ENCODE measurements at regions of chr2 and their contacts with region 1.

Region 1: DNA sequence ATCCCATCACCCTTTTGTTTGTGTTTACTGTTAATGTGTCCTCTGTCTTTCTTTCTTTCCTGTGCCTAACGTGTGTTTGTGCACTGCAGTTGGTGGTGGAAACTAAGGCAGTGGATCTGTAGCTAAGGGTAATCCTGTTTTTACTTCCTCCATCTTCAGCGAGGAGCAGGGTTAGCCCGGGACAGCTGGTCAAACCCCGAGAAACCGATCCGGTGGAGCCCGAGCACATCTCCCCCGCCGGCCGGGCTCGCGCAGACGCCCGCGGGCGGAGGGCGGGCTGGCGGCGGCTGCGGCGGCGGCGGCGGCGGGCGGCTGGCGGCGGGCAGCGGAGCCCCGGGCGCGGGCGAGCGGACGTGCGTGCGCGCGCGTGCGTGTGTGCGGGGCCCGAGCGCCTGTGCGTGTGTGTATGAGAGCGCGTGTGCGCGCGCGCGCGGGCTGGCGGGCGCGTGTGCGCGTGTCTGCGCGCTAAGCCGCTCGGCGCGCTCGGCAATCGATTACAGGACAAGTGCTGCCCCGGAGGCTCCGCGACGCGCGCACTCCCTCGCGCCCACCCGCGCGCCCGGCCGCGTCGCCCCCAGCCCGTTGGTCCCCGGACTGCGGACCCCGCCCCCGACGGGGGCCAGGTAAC is at the start of gene IKZF2:
- DNase-seq: peak; percentile 56
- H3K4me3 Mint-ChIP-seq: peak within 1 kb of the TSS; percentile 81
- H3K27ac Mint-ChIP-seq: peak within 1 kb of the TSS; percentile 68
- H3K4me1 Mint-ChIP-seq: peaks cover 17% of the 10 kb centered on the region
- H3K27me3 Mint-ChIP-seq: peaks cover 54% of the 10 kb centered on the region
- total RNA-seq, gene IKZF2: 1.6 to 1.7 TPM

Region 2: GRCh38 chr2:212686285-212686895 is 465.2 kb before region 1 on chr2:
- CTCF ChIA-PET with region 1: interaction called, 3 read pairs
- intact Hi-C with region 1: loop called (anchors 1 kb)
- DNase-seq: peak; percentile 72
- H3K4me3 Mint-ChIP-seq: no peak overlapping the region
- H3K27ac Mint-ChIP-seq: no peak overlapping the region
- H3K4me1 Mint-ChIP-seq: no peaks in the 10 kb centered on the region
- H3K27me3 Mint-ChIP-seq: no peaks in the 10 kb centered on the region

Region 3: DNA sequence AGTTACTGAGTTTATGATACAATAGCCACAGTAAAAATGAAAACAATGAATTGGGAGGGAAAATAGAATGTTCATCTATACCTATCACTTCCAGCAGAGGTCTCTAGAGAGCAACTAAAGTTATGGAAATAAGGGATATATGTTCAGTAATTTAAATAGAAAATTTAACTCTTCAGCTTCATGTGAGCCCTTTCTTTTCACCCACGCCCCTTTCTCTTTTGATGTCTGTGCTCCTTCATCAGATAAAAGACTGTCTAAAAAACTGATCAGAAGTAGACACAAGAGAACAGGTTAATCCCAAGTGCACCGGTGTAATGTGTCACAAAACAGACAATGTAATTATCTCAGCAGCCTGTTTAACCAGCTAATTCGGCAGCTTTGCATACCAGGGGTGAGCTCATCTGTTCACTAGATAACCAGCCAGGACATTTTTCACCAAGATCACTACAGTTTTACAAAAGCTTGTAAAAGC is 374.5 kb before region 1 on chr2:
- CTCF ChIA-PET with region 1: interaction called, 6 read pairs
- intact Hi-C with region 1: loop called (anchors 1 kb)
- DNase-seq: no peak
- H3K4me3 Mint-ChIP-seq: no peak overlapping the region
- H3K27ac Mint-ChIP-seq: no peak overlapping the region
- H3K4me1 Mint-ChIP-seq: no peaks in the 10 kb centered on the region
- H3K27me3 Mint-ChIP-seq: peaks cover 2% of the 10 kb centered on the region

Region 4: DNA sequence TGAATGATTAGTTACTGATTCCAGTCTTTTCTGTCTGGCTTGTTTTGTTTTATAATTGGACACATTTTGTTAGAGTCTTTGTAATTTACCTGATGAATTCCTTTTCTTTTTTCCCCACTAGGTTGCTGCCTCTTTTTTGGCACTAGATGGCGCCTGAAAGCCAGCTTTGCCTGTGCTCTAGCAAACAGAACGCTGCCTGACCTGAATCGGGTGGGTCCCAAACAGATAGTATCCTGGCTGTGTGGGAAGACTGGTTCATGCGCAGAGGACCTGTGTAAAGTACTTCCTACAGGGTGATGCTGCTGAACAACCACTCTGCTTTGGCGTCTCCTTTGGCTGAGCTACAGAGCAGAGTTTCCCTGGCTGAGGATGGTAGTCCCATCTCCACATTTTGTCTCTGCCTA is 288.4 kb before region 1 on chr2:
- CTCF ChIA-PET with region 1: interaction called, 4 read pairs
- intact Hi-C with region 1: loop called (anchors 1 kb)
- DNase-seq: peak; percentile 43
- H3K4me3 Mint-ChIP-seq: no peak overlapping the region
- H3K27ac Mint-ChIP-seq: no peak overlapping the region
- H3K4me1 Mint-ChIP-seq: no peaks in the 10 kb centered on the region
- H3K27me3 Mint-ChIP-seq: no peaks in the 10 kb centered on the region

Region 5: DNA sequence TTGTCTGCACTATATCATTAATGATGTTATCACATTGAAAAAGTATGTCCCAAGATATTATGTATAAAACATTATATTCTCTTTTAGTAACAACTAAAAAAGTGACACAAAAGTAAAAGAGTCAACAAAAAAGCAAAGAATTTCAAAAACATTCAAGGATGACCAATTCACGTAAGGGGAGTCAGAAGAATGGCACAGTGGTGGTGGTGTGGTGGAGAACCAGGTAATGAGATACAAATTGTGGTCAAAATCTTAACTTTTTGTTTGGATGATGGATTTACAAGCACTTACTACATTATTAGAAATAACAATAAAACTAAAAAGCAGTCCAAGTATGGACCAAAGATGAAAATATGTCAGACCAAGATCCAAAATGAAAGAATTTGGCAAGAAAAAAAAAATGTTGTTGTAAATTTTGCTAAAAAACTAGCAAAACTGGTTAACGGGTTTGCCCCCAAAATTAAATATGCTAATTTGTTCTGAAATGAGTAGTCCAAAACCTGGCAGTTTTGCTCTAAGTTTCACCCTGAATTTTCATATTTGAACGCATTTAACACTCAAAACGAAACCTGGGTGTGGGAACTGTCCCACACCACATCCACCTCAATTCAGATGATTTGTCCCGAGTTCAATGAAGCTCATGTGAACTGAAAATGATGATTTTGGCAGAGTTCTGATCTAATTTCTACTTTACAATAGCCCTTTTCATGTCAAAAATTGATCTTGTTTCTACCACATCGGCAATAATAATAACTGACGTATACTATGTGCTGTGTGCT is 136.0 kb before region 1 on chr2:
- CTCF ChIA-PET with region 1: no interaction called
- intact Hi-C with region 1: loop called (anchors 2 kb)
- DNase-seq: peak; percentile 66
- H3K4me3 Mint-ChIP-seq: no peak overlapping the region
- H3K27ac Mint-ChIP-seq: no peak overlapping the region
- H3K4me1 Mint-ChIP-seq: peaks cover 18% of the 10 kb centered on the region
- H3K27me3 Mint-ChIP-seq: peaks cover 9% of the 10 kb centered on the region

Region 6: GRCh38 chr2:213119061-213119856 is 32.3 kb before region 1 on chr2:
- CTCF ChIA-PET with region 1: interaction called, 4 read pairs
- intact Hi-C with region 1: loop called (anchors 2 kb)
- DNase-seq: peak; percentile 6
- H3K4me3 Mint-ChIP-seq: no peak overlapping the region
- H3K27ac Mint-ChIP-seq: peak overlapping the region; percentile 23
- H3K4me1 Mint-ChIP-seq: peaks cover 9% of the 10 kb centered on the region
- H3K27me3 Mint-ChIP-seq: peaks cover 6% of the 10 kb centered on the region

Region 7: GRCh38 chr2:213284105-213285090 is 132.8 kb after region 1 on chr2 and contains the start of gene SPAG16:
- CTCF ChIA-PET with region 1: no interaction called
- intact Hi-C with region 1: loop called (anchors 2 kb)
- DNase-seq: peak; percentile 98
- H3K4me3 Mint-ChIP-seq: peak within 1 kb of the TSS; percentile 92
- H3K27ac Mint-ChIP-seq: peak within 1 kb of the TSS; percentile 88
- H3K4me1 Mint-ChIP-seq: peaks cover 32% of the 10 kb centered on the region
- H3K27me3 Mint-ChIP-seq: no peaks in the 10 kb centered on the region
- total RNA-seq, gene SPAG16: 8.4 to 8.8 TPM

Measured in activated naive CD4-positive, alpha-beta T cell treated with anti-CD3 and anti-CD28 coated beads for 36 hours (primary cell).